OCI-LY7 (cell line): ENCODE measurements at regions of chr10 and their contacts with region 1.

Region 1: DNA sequence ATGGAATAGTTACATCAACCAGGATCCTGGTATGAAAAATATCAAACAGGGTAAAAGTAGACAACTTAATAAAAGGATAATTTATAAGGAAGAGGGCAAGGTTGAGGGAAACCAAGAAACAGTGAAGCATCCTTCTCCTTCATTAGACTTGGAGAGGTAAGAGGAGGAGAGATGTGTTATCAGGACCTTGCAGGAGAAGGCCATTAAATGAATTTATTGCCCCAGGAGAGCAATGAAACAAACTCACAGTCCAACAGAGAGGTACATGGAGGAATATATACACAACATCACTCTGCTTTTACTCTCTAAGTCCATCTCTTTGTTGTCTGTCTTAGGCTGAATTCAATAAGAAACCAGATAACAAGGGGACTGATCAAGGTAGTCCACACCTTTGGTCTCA is 966.2 kb downstream of the SORCS1 start:
- DNase-seq: no peak
- H3K4me3 ChIP-seq: no peak overlapping the region
- H3K27ac ChIP-seq: no peak overlapping the region
- H3K4me1 ChIP-seq: no peaks in the 10 kb centered on the region
- CTCF ChIP-seq: no peak

Region 2: GRCh38 chr10:105468759-105469158 is 729.5 kb before region 1 on chr10:
- CTCF ChIA-PET with region 1: no interaction called
- POLR2A ChIA-PET with region 1: no interaction called
- intact Hi-C with region 1: loop called (anchors 5 kb)
- DNase-seq: no peak
- H3K4me3 ChIP-seq: no peak overlapping the region
- H3K27ac ChIP-seq: no peak overlapping the region
- H3K4me1 ChIP-seq: no peaks in the 10 kb centered on the region
- CTCF ChIP-seq: no peak